Activated CD8-positive, alpha-beta T cell treated with anti-CD3 and anti-CD28 coated beads for 36 hours (primary cell): ENCODE measurements at regions of chr12 and their contacts with region 1.

Region 1: GRCh38 chr12:106841510-106842302 is 67.2 kb downstream of the RIC8B start:
- DNase-seq: peak; percentile 59
- ATAC-seq: no peak
- H3K4me3 Mint-ChIP-seq: no peak overlapping the region
- H3K27ac Mint-ChIP-seq: no peak overlapping the region
- H3K4me1 Mint-ChIP-seq: peaks cover 13% of the 10 kb centered on the region
- H3K27me3 Mint-ChIP-seq: no peaks in the 10 kb centered on the region
- CTCF ChIP-seq: peak; percentile 65

Region 2: DNA sequence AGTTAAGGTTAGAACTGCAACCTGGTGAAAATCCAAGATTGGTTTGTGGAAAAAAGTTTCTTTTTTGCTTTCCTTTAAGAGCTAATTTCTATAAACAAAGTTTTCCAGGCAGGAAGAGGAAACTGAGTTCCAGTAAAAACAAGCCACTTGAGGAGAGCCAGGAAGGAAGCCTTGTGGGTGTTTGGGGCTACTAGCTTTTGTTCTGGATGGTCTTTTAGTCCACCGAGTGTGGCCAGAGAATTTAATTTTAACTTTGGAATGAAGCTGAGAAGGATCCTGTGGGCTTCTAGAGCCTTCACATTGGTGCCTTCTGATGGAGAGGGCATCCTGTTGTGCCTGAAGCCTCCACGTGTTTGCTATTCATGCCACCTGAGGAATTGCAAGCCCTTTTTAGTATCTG is 1183.3 kb before region 1 on chr12:
- CTCF ChIA-PET with region 1: no interaction called
- POLR2A ChIA-PET with region 1: no interaction called
- intact Hi-C with region 1: no loop called
- DNase-seq: no peak
- ATAC-seq: no peak
- H3K4me3 Mint-ChIP-seq: no peak overlapping the region
- H3K27ac Mint-ChIP-seq: no peak overlapping the region
- H3K4me1 Mint-ChIP-seq: no peaks in the 10 kb centered on the region
- H3K27me3 Mint-ChIP-seq: peaks cover 4% of the 10 kb centered on the region
- CTCF ChIP-seq: no peak

Region 3: GRCh38 chr12:106386813-106387535 is 454.7 kb before region 1 on chr12:
- CTCF ChIA-PET with region 1: interaction called, 4 read pairs
- POLR2A ChIA-PET with region 1: no interaction called
- intact Hi-C with region 1: loop called (anchors 10 kb)
- DNase-seq: no peak
- ATAC-seq: no peak
- H3K4me3 Mint-ChIP-seq: no peak overlapping the region
- H3K27ac Mint-ChIP-seq: no peak overlapping the region
- H3K4me1 Mint-ChIP-seq: no peaks in the 10 kb centered on the region
- H3K27me3 Mint-ChIP-seq: no peaks in the 10 kb centered on the region
- CTCF ChIP-seq: no peak

Region 4: GRCh38 chr12:106436164-106436563 is 405.5 kb before region 1 on chr12:
- CTCF ChIA-PET with region 1: no interaction called
- POLR2A ChIA-PET with region 1: no interaction called
- intact Hi-C with region 1: no loop called
- DNase-seq: no peak
- ATAC-seq: no peak
- H3K4me3 Mint-ChIP-seq: no peak overlapping the region
- H3K27ac Mint-ChIP-seq: no peak overlapping the region
- H3K4me1 Mint-ChIP-seq: no peaks in the 10 kb centered on the region
- H3K27me3 Mint-ChIP-seq: no peaks in the 10 kb centered on the region
- CTCF ChIP-seq: no peak

Region 5: GRCh38 chr12:106926657-106927056 is 85.0 kb after region 1 on chr12:
- CTCF ChIA-PET with region 1: no interaction called
- POLR2A ChIA-PET with region 1: no interaction called
- intact Hi-C with region 1: no loop called
- DNase-seq: no peak
- ATAC-seq: no peak
- H3K4me3 Mint-ChIP-seq: no peak overlapping the region
- H3K27ac Mint-ChIP-seq: no peak overlapping the region
- H3K4me1 Mint-ChIP-seq: no peaks in the 10 kb centered on the region
- H3K27me3 Mint-ChIP-seq: peaks cover 19% of the 10 kb centered on the region
- CTCF ChIP-seq: no peak